CD4-positive, alpha-beta T cell (primary cell): ENCODE measurements at regions of chr2 and their contacts with region 1.

Region 1: GRCh38 chr2:157375384-157375783 is 49.8 kb upstream of the ERMN start:
- DNase-seq: no peak
- ATAC-seq: no peak
- H3K4me3 ChIP-seq: no peak overlapping the region
- H3K4me3 Mint-ChIP-seq: no peak overlapping the region
- H3K27ac ChIP-seq: no peak overlapping the region
- H3K27ac Mint-ChIP-seq: no peak overlapping the region
- H3K4me1 ChIP-seq: no peaks in the 10 kb centered on the region
- H3K4me1 Mint-ChIP-seq: peaks cover 32% of the 10 kb centered on the region
- H3K27me3 ChIP-seq: no peaks in the 10 kb centered on the region
- H3K27me3 Mint-ChIP-seq: no peaks in the 10 kb centered on the region
- CTCF ChIP-seq: no peak

Region 2: DNA sequence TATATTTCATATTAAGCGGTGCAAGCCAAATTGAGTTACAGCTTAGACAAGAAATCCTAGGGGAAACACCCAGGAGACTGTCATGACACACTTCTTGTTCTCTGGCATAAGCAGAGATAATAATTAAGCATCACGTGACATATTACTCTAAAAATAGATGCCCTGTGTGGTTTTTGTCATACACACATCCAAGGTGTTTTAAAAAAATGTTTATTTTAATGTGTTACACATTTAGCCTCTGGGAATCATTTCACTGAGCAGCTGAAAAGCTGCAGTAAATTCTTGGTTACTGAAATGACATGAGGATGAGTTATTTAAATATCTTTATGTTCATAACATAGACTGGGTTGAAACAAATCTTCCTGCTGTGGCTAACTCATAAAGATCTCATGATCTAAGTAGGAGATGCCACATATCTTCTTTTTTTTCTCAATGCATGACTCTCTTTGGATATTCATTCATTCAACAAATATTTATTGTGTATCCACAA is 11.7 kb before region 1 on chr2:
- CTCF ChIA-PET with region 1: no interaction called
- POLR2A ChIA-PET with region 1: no interaction called
- intact Hi-C with region 1: no loop called
- DNase-seq: peak in 1 of 14 experiments; percentile 34
- ATAC-seq: no peak
- H3K4me3 ChIP-seq: no peak overlapping the region
- H3K4me3 Mint-ChIP-seq: no peak overlapping the region
- H3K27ac ChIP-seq: no peak overlapping the region
- H3K27ac Mint-ChIP-seq: no peak overlapping the region
- H3K4me1 ChIP-seq: peaks cover 3% of the 10 kb centered on the region
- H3K4me1 Mint-ChIP-seq: peaks cover 48% of the 10 kb centered on the region
- H3K27me3 ChIP-seq: no peaks in the 10 kb centered on the region
- H3K27me3 Mint-ChIP-seq: no peaks in the 10 kb centered on the region
- CTCF ChIP-seq: no peak

Region 3: DNA sequence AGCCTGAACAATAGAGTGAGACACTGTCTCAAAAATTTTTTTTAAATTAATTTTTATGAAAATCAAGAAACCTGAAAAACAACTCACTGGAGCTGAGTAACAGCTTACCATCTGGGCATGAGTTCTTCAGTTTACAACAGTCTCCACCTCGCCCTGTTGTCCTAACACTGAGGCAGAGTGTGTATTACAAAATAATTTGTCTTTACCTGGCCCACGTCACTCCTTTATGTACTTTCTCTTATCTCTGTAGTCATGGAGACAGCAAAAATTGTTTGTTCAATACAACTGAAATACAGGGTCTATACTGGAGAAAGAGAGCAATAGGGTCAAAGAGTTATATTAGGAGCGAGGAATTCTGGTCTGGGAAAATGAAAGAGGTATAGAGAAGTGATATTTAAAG is 20.4 kb after region 1 on chr2:
- CTCF ChIA-PET with region 1: no interaction called
- POLR2A ChIA-PET with region 1: no interaction called
- intact Hi-C with region 1: loop called in 1 of 2 experiments (anchors 2 kb)
- DNase-seq: peak in 1 of 14 experiments; percentile 35
- ATAC-seq: peak; percentile 64
- H3K4me3 ChIP-seq: no peak overlapping the region
- H3K4me3 Mint-ChIP-seq: no peak overlapping the region
- H3K27ac ChIP-seq: no peak overlapping the region
- H3K27ac Mint-ChIP-seq: no peak overlapping the region
- H3K4me1 ChIP-seq: no peaks in the 10 kb centered on the region
- H3K4me1 Mint-ChIP-seq: peaks cover 22% of the 10 kb centered on the region
- H3K27me3 ChIP-seq: no peaks in the 10 kb centered on the region
- H3K27me3 Mint-ChIP-seq: no peaks in the 10 kb centered on the region
- CTCF ChIP-seq: no peak